Colonic mucosa (tissue), 4 donors: ENCODE measurements at regions of chr17 and their contacts with region 1.

Region 1: GRCh38 chr17:66255112-66255511 is 25.9 kb upstream of the APOH start:
- DNase-seq: peak; percentile 44
- H3K4me3 ChIP-seq: no peak overlapping the region
- H3K27ac ChIP-seq: no peak overlapping the region
- H3K4me1 ChIP-seq: no peaks in the 10 kb centered on the region
- H3K27me3 ChIP-seq: no peaks in the 10 kb centered on the region
- CTCF ChIP-seq: peak; percentile 62

Region 2: DNA sequence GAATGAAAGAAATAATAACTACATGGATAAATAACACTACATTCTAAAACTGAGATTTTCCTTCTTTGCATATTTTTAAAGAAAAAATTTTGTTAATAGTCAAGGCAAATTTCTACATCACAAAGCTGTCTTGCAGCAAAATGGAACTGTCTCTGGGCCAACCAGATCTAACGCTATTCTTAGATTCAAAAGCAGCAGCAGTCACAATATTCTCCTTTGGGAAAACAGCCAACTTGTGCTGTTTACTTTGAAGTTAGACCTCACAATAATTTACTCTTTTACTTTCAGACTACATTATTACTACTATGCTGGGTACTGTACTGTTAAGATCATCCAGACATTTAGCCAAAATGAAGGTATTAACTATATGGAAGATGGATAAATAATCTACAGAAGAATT is 252.3 kb before region 1 on chr17:
- intact Hi-C with region 1: no loop called
- DNase-seq: no peak
- H3K4me3 ChIP-seq: no peak overlapping the region
- H3K27ac ChIP-seq: no peak overlapping the region
- H3K4me1 ChIP-seq: no peaks in the 10 kb centered on the region
- H3K27me3 ChIP-seq: no peaks in the 10 kb centered on the region
- CTCF ChIP-seq: no peak

Region 3: GRCh38 chr17:66426397-66427033 is 171.4 kb after region 1 on chr17:
- intact Hi-C with region 1: loop called (anchors 10 kb)
- DNase-seq: peak; percentile 48
- H3K4me3 ChIP-seq: no peak overlapping the region
- H3K27ac ChIP-seq: no peak overlapping the region
- H3K4me1 ChIP-seq: no peaks in the 10 kb centered on the region
- H3K27me3 ChIP-seq: no peaks in the 10 kb centered on the region
- CTCF ChIP-seq: peak; percentile 36

Region 4: GRCh38 chr17:66567234-66568170 is 312.4 kb after region 1 on chr17:
- intact Hi-C with region 1: loop called (anchors 5 kb)
- DNase-seq: peak; percentile 91
- H3K4me3 ChIP-seq: no peak overlapping the region
- H3K27ac ChIP-seq: no peak overlapping the region
- H3K4me1 ChIP-seq: no peaks in the 10 kb centered on the region
- H3K27me3 ChIP-seq: no peaks in the 10 kb centered on the region
- CTCF ChIP-seq: peak; percentile 90

Region 5: DNA sequence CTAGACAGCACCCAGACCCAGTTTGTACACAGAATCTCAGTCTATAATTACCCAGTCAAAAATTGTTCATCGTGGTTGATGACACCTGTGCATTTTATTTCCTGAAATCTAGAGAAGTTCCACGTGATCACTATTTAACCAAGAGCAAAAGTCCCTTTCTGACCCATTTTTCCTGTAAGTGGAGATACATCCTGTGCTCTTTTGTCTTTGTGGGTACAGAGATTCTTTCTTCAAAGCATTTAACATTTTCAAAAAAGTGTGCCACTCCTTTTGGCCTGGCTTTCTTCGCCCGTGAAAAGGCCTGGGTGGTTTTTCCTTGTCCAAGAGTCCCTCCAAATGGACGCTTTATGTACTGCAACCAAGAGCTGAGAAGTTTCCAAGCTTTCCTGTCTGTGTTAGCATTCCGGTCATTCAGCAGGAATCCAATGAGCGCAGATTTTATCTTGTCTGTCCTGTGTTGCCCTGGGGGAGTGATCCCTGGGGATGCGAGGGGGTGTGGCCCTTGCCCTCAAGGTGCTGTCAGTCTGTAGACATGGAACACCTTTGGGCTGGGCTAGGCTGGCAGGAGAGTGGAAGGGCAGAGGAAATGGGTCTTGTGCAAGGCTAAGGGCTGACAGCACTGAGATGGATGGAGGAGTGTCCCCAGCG is 418.7 kb after region 1 on chr17:
- intact Hi-C with region 1: loop called (anchors 2 kb)
- DNase-seq: peak; percentile 71
- H3K4me3 ChIP-seq: no peak overlapping the region
- H3K27ac ChIP-seq: peak overlapping the region; percentile 16
- H3K4me1 ChIP-seq: peaks cover 9% of the 10 kb centered on the region
- H3K27me3 ChIP-seq: no peaks in the 10 kb centered on the region
- CTCF ChIP-seq: peak; percentile 58